Adrenal gland (tissue), 19 donors: ENCODE measurements at regions of chr2 and their contacts with region 1.

Region 1: GRCh38 chr2:71299507-71299906 is 32.1 kb upstream of the ZNF638 start:
- DNase-seq: no peak
- H3K4me3 ChIP-seq: no peak overlapping the region
- H3K27ac ChIP-seq: no peak overlapping the region
- H3K4me1 ChIP-seq: no peaks in the 10 kb centered on the region
- H3K27me3 ChIP-seq: no peaks in the 10 kb centered on the region
- CTCF ChIP-seq: peak; percentile 50 to 83 (median 70)
- POLR2A ChIP-seq: no peak

Region 2: DNA sequence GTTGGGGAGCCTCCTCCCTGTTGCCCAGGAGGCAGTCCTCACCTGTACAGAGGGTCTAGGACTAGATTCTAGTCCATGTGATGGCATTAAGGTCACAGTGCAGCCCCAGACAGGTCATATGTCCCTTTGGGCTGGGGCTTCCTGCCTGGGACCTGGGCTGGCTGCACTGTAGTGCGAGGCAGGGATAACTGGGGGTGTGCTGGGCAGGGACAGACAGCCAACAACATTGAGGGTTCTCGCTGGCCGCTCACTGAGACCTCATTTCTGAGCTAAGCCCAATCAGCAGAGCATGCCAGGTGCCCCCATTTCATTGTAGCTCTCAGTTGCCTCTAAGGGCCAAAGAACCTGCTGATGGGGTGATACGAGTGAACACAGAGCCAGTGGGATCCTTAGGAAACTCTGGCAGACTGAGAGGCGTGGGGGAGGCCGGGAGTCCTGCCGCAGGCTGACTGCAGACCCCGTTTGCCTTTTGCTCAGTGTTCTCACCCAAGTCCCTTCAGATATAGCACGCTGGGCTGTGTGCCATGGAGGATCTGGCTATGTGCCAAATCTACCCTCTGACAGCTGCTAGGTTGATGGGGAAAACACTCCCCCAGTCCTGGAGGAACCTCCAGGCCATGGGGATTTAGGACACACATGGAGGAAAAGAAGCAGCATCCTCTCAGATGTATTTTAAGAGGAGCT is 205.7 kb after region 1 on chr2:
- intact Hi-C with region 1: loop called (anchors 2 to 5 kb)
- DNase-seq: no peak
- H3K4me3 ChIP-seq: no peak overlapping the region
- H3K27ac ChIP-seq: peak overlapping the region in 1 of 5 donors; percentile 49
- H3K4me1 ChIP-seq: no peaks in the 10 kb centered on the region
- H3K27me3 ChIP-seq: no peaks in the 10 kb centered on the region
- CTCF ChIP-seq: no peak
- POLR2A ChIP-seq: no peak

Region 3: GRCh38 chr2:71510196-71510807 is 210.8 kb after region 1 on chr2:
- intact Hi-C with region 1: loop called (anchors 2 to 5 kb)
- DNase-seq: peak; percentile 63 to 85 (median 72)
- H3K4me3 ChIP-seq: no peak overlapping the region
- H3K27ac ChIP-seq: no peak overlapping the region
- H3K4me1 ChIP-seq: no peaks in the 10 kb centered on the region
- H3K27me3 ChIP-seq: no peaks in the 10 kb centered on the region
- CTCF ChIP-seq: peak; percentile 71 to 94 (median 90)
- POLR2A ChIP-seq: no peak